Naive thymus-derived CD4-positive, alpha-beta T cell (primary cell): ENCODE measurements at regions of chr12 and their contacts with region 1.

Region 1: GRCh38 chr12:818733-819132 is 66.4 kb downstream of the WNK1 start:
- DNase-seq: no peak
- ATAC-seq: no peak
- H3K4me3 ChIP-seq: no peak overlapping the region
- H3K4me3 Mint-ChIP-seq: no peak overlapping the region
- H3K27ac ChIP-seq: no peak overlapping the region
- H3K27ac Mint-ChIP-seq: peak overlapping the region in 5 of 9 donors; percentile 2 to 55 (median 19)
- H3K4me1 ChIP-seq: peaks cover 4 to 9% of the 10 kb centered on the region in 2 donors
- H3K4me1 Mint-ChIP-seq: peaks cover 25 to 72% (median 69%) of the 10 kb centered on the region in 7 donors
- H3K27me3 ChIP-seq: no peaks in the 10 kb centered on the region
- H3K27me3 Mint-ChIP-seq: no peaks in the 10 kb centered on the region

Region 2: GRCh38 chr12:459430-460258 is 359.1 kb before region 1 on chr12 and contains the start of gene B4GALNT3:
- CTCF ChIA-PET with region 1: no interaction called
- POLR2A ChIA-PET with region 1: no interaction called
- intact Hi-C with region 1: loop called in 1 of 2 experiments (anchors 5 kb)
- DNase-seq: peak in 7 of 9 donors; percentile 17 to 40 (median 27)
- ATAC-seq: peak; percentile 80
- H3K4me3 ChIP-seq: peak within 1 kb of the TSS; percentile 72
- H3K4me3 Mint-ChIP-seq: peak within 1 kb of the TSS; percentile 82 to 90 (median 86)
- H3K27ac ChIP-seq: no peak within 1 kb of the TSS
- H3K27ac Mint-ChIP-seq: peak within 1 kb of the TSS in 2 of 9 donors; percentile 43 to 48
- H3K4me1 ChIP-seq: peaks cover 9 to 13% of the 10 kb centered on the region in 2 donors
- H3K4me1 Mint-ChIP-seq: peaks cover 8 to 31% (median 18%) of the 10 kb centered on the region in 7 donors
- H3K27me3 ChIP-seq: no peaks in the 10 kb centered on the region
- H3K27me3 Mint-ChIP-seq: peaks cover 5 to 83% (median 14%) of the 10 kb centered on the region in 5 donors
- total RNA-seq, gene B4GALNT3: 0.49 to 12.2 (median 1.3) TPM

Region 3: GRCh38 chr12:614411-614970 is 204.2 kb before region 1 on chr12:
- CTCF ChIA-PET with region 1: interaction called, 48 read pairs
- POLR2A ChIA-PET with region 1: no interaction called
- intact Hi-C with region 1: loop called in 1 of 2 experiments (anchors 1 kb)
- DNase-seq: peak in 4 of 9 donors; percentile 16 to 40 (median 32)
- ATAC-seq: peak; percentile 30
- H3K4me3 ChIP-seq: no peak overlapping the region
- H3K4me3 Mint-ChIP-seq: no peak overlapping the region
- H3K27ac ChIP-seq: no peak overlapping the region
- H3K27ac Mint-ChIP-seq: peak overlapping the region in 5 of 9 donors; percentile 30 to 70 (median 51)
- H3K4me1 ChIP-seq: peaks cover 6 to 19% of the 10 kb centered on the region in 2 donors
- H3K4me1 Mint-ChIP-seq: peaks cover 29 to 56% (median 43%) of the 10 kb centered on the region in 7 donors
- H3K27me3 ChIP-seq: no peaks in the 10 kb centered on the region
- H3K27me3 Mint-ChIP-seq: no peaks in the 10 kb centered on the region

Region 4: GRCh38 chr12:835754-836518 is 17.2 kb after region 1 on chr12:
- CTCF ChIA-PET with region 1: interaction called, 5 read pairs
- POLR2A ChIA-PET with region 1: no interaction called
- intact Hi-C with region 1: loop called in 1 of 2 experiments (anchors 2 kb)
- DNase-seq: no peak
- ATAC-seq: no peak
- H3K4me3 ChIP-seq: no peak overlapping the region
- H3K4me3 Mint-ChIP-seq: no peak overlapping the region
- H3K27ac ChIP-seq: no peak overlapping the region
- H3K27ac Mint-ChIP-seq: peak overlapping the region in 5 of 9 donors; percentile 9 to 53 (median 48)
- H3K4me1 ChIP-seq: no peaks in the 10 kb centered on the region
- H3K4me1 Mint-ChIP-seq: peaks cover 14 to 57% (median 50%) of the 10 kb centered on the region in 7 donors
- H3K27me3 ChIP-seq: no peaks in the 10 kb centered on the region
- H3K27me3 Mint-ChIP-seq: no peaks in the 10 kb centered on the region

Region 5: GRCh38 chr12:873954-874353 is 55.2 kb after region 1 on chr12:
- CTCF ChIA-PET with region 1: interaction called, 3 read pairs
- POLR2A ChIA-PET with region 1: no interaction called
- intact Hi-C with region 1: loop called in 1 of 2 experiments (anchors 5 kb)
- DNase-seq: no peak
- ATAC-seq: no peak
- H3K4me3 ChIP-seq: no peak overlapping the region
- H3K4me3 Mint-ChIP-seq: no peak overlapping the region
- H3K27ac ChIP-seq: no peak overlapping the region
- H3K27ac Mint-ChIP-seq: peak overlapping the region in 4 of 9 donors; percentile 14 to 80 (median 32)
- H3K4me1 ChIP-seq: peaks cover 6 to 14% of the 10 kb centered on the region in 2 donors
- H3K4me1 Mint-ChIP-seq: peaks cover 6 to 20% (median 14%) of the 10 kb centered on the region in 7 donors
- H3K27me3 ChIP-seq: no peaks in the 10 kb centered on the region
- H3K27me3 Mint-ChIP-seq: no peaks in the 10 kb centered on the region